HEK293 (cell line): ENCODE measurements at regions of chr12 and their contacts with region 1.

Region 1: GRCh38 chr12:59113831-59114615 is 193.7 kb upstream of the LRIG3 start:
- H3K4me3 ChIP-seq: no peak overlapping the region
- H3K27ac ChIP-seq: no peak overlapping the region
- H3K4me1 ChIP-seq: no peaks in the 10 kb centered on the region
- CTCF ChIP-seq: peak; percentile 75

Region 2: GRCh38 chr12:58540480-58541299 is 573.3 kb before region 1 on chr12:
- CTCF ChIA-PET with region 1: interaction called, 20 read pairs
- POLR2A ChIA-PET with region 1: no interaction called
- H3K4me3 ChIP-seq: no peak overlapping the region
- H3K27ac ChIP-seq: no peak overlapping the region
- H3K4me1 ChIP-seq: no peaks in the 10 kb centered on the region
- CTCF ChIP-seq: peak; percentile 77

Region 3: GRCh38 chr12:59046763-59047534 is 67.1 kb before region 1 on chr12:
- CTCF ChIA-PET with region 1: no interaction called
- POLR2A ChIA-PET with region 1: no interaction called
- H3K4me3 ChIP-seq: no peak overlapping the region
- H3K27ac ChIP-seq: no peak overlapping the region
- H3K4me1 ChIP-seq: no peaks in the 10 kb centered on the region
- CTCF ChIP-seq: no peak

Region 4: GRCh38 chr12:59097876-59098275 is 16.1 kb before region 1 on chr12:
- CTCF ChIA-PET with region 1: interaction called, 18 read pairs
- POLR2A ChIA-PET with region 1: no interaction called
- H3K4me3 ChIP-seq: no peak overlapping the region
- H3K27ac ChIP-seq: no peak overlapping the region
- H3K4me1 ChIP-seq: no peaks in the 10 kb centered on the region
- CTCF ChIP-seq: no peak

Region 5: GRCh38 chr12:59142175-59142790 is 28.3 kb after region 1 on chr12:
- CTCF ChIA-PET with region 1: interaction called, 11 read pairs
- POLR2A ChIA-PET with region 1: no interaction called
- H3K4me3 ChIP-seq: no peak overlapping the region
- H3K27ac ChIP-seq: no peak overlapping the region
- H3K4me1 ChIP-seq: no peaks in the 10 kb centered on the region
- CTCF ChIP-seq: no peak

Region 6: DNA sequence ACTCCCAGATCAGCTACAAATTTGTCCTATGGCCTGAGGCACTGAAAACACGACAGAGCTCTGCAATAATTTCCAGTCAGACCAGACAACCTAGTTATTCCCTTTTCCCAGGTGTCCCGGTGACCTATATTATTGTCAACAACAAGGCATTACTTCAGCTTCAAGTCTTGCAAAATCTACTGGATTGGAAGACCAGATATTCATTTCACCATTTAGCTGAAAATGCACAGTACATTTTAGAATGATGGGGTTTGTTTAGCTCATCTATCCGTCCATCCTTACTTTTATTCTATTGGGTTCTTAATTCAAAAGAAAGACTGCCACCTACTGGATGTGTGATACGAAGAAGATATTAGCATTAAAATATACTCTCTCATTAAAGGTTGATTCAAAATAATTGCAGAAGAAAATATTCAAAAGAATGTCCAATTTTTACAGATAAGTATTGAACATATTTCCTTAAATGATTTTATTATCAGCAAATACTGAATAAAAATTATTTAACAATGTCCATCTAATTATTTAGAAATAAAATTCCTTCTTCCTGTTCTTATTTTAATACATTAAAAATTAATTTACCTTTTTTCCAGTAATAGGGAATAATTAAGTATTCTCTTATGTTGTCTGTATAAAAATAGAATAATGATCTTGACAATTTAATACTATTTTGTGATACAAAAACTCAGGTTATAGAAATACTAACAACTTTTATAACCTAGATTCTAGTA is 51.1 kb after region 1 on chr12:
- CTCF ChIA-PET with region 1: interaction called, 24 read pairs
- POLR2A ChIA-PET with region 1: no interaction called
- H3K4me3 ChIP-seq: no peak overlapping the region
- H3K27ac ChIP-seq: no peak overlapping the region
- H3K4me1 ChIP-seq: no peaks in the 10 kb centered on the region
- CTCF ChIP-seq: no peak

Region 7: DNA sequence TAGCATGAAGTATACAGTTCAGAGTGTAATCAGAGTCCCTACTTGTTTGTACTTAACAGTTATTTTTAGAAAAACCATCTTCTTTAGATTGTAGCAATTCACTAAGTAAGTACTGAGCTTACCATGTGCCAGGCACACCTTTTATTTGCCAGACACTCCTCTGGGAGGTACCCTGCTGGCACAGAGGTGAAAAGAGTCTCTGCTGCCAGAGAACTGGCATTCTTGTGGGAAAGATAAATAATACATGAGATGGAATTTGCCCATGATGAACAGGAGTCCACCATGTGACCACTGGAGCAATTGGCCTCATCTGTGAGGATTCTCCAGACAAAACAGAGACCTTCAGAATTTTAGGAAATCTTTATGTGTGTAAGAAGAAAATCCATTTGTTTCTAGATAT is 282.5 kb after region 1 on chr12:
- CTCF ChIA-PET with region 1: no interaction called
- POLR2A ChIA-PET with region 1: no interaction called
- H3K4me3 ChIP-seq: no peak overlapping the region
- H3K27ac ChIP-seq: no peak overlapping the region
- H3K4me1 ChIP-seq: no peaks in the 10 kb centered on the region
- CTCF ChIP-seq: no peak